ENCODE measurements at regions of chr14 and their contacts with region 1.

Region 1: DNA sequence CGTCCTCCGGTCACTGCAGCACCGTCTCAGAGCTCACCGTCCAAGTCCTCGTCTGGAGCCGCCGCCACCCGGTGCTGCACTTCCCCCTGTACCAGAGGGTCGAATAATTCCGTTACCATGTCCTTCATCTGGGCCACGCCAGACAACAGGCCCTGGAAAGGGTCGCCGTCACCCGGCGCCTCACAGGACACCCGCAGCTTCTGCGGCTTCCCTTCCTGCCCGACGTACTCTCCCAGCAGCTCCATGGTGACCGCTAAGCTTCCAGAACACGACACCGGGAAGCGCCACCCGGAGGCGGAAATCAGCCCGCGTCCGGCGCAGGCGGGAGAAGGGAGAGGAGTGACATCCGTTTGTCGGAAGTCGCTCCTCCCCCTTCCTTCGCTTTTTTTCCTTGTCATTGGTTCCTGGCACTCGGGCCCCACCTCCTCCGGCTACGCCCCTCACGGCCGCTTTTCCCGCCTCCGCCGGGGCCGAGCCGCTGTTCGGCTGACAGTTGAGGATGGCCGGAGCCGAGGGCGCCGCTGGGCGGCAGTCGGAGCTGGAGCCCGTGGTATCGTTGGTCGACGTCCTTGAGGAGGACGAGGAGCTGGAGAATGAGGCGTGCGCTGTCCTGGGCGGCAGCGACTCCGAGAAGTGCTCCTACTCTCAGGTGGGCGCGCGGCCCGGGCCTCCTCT is at the starts of genes GON7 and UBR7:
- DNase-seq: peak; percentile 98
- H3K4me3 Mint-ChIP-seq: peak within 1 kb of the TSS; percentile 97
- H3K27ac Mint-ChIP-seq: peak within 1 kb of the TSS; percentile 98
- H3K4me1 Mint-ChIP-seq: peaks cover 12% of the 10 kb centered on the region
- H3K27me3 Mint-ChIP-seq: no peaks in the 10 kb centered on the region
- CTCF ChIP-seq: no peak
- total RNA-seq, gene GON7: 9.9 and 12.3 TPM in 2 replicates
- total RNA-seq, gene UBR7: 12.7 and 13.0 TPM in 2 replicates

Region 2: DNA sequence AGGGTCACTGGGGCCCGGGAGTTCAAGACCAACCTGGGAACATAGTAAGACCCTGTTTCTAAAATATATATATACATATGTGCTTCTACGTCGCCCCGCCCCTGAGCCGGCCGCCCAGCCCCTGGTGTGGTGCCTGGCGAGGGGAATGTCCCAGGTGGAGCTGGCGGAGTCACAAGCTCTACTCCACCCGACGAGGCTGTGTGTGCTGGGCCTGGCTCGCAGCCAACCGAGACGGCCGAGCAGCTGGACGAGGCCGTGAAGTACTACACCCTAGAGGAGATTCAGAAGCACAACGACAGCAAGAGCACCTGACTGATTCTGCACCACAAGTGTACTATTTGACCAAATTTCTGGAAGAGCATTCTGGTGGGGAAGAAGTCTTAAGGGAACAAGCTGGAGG is 69.1 kb before region 1 on chr14:
- CTCF ChIA-PET with region 1: interaction called, 3 read pairs
- POLR2A ChIA-PET with region 1: interaction called, 6 read pairs
- intact Hi-C with region 1: loop called (anchors 1 kb)
- DNase-seq: peak; percentile 58
- H3K4me3 Mint-ChIP-seq: no peak overlapping the region
- H3K27ac Mint-ChIP-seq: no peak overlapping the region
- H3K4me1 Mint-ChIP-seq: peaks cover 22% of the 10 kb centered on the region
- H3K27me3 Mint-ChIP-seq: no peaks in the 10 kb centered on the region
- CTCF ChIP-seq: no peak

Region 3: DNA sequence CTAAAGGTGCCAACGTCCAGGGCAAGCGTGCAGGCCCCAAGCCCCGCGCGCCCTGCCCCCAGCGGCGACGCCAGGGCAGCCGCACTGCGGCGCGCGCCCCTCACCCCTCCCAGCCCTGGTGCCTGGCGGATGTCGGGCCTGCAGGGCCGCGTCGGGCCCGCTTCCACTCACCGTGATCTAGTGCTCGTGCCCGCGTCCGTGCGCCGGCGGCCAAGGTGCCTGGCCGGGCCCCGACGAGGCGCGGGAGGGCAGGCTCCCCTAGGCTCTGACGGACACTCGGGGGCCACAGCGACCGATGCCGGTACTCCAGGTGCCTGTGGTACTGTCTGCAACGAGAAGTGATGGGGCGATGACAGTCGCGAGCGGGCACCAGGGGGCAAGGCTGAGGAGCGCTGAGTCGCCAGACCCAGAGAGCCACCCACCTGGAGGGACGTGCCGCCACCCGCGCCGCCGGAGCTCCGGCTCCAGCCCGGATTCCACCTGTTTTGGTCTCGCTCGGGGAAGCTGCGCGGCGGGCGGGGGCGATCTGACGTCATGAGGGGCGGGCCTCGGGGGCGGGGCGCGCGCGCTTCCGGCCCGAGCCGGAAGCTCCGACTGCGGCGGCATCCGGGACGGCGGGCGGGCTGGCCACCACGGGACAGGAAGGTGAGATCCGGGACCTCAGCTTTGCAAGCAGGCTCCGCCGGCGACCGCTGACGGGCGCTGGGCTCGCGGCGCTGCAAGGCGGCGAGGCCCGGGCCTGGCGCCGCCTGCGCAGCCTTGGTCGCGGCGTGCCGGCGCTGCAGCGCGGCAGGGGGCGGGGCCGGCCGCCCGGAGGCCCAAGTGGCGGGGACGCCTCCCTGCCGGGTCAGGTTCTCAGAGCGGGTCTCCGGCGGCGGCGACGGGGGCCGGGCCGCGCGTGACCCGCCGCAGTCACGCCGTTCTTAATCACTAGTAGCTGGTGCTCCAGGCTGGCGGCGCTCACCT is 22.3 kb before region 1 on chr14 and contains the starts of genes LYSET and MOAP1:
- CTCF ChIA-PET with region 1: interaction called, 18 read pairs
- POLR2A ChIA-PET with region 1: interaction called, 77 read pairs
- intact Hi-C with region 1: loop called (anchors 2 kb)
- DNase-seq: peak; percentile 79
- H3K4me3 Mint-ChIP-seq: peak within 1 kb of the TSS; percentile 88
- H3K27ac Mint-ChIP-seq: peak within 1 kb of the TSS; percentile 84
- H3K4me1 Mint-ChIP-seq: peaks cover 15% of the 10 kb centered on the region
- H3K27me3 Mint-ChIP-seq: no peaks in the 10 kb centered on the region
- CTCF ChIP-seq: no peak
- total RNA-seq, gene LYSET: 14.3 and 15.4 TPM in 2 replicates
- total RNA-seq, gene MOAP1: 17.5 and 22.1 TPM in 2 replicates

Region 4: GRCh38 chr14:93195316-93195999 is 11.5 kb before region 1 on chr14:
- CTCF ChIA-PET with region 1: interaction called, 17 read pairs
- POLR2A ChIA-PET with region 1: interaction called, 22 read pairs
- intact Hi-C with region 1: no loop called
- DNase-seq: no peak
- H3K4me3 Mint-ChIP-seq: no peak overlapping the region
- H3K27ac Mint-ChIP-seq: no peak overlapping the region
- H3K4me1 Mint-ChIP-seq: no peaks in the 10 kb centered on the region
- H3K27me3 Mint-ChIP-seq: no peaks in the 10 kb centered on the region
- CTCF ChIP-seq: no peak

Region 5: GRCh38 chr14:93543766-93544165 is 336.8 kb after region 1 on chr14:
- CTCF ChIA-PET with region 1: interaction called, 6 read pairs
- POLR2A ChIA-PET with region 1: no interaction called
- intact Hi-C with region 1: loop called (anchors 10 kb)
- DNase-seq: peak; percentile 35
- H3K4me3 Mint-ChIP-seq: no peak overlapping the region
- H3K27ac Mint-ChIP-seq: no peak overlapping the region
- H3K4me1 Mint-ChIP-seq: no peaks in the 10 kb centered on the region
- H3K27me3 Mint-ChIP-seq: peaks cover 34% of the 10 kb centered on the region
- CTCF ChIP-seq: peak; percentile 43